GM13976 (cell line): ENCODE measurements at regions of chr15 and their contacts with region 1.

Region 1: GRCh38 chr15:101294731-101295606 is at the start of gene SNRPA1:
- DNase-seq: peak; percentile 98
- CTCF ChIP-seq: no peak

Region 2: GRCh38 chr15:101179341-101180153 is 115.4 kb before region 1 on chr15:
- in situ Hi-C with region 1: no loop called
- DNase-seq: no peak
- CTCF ChIP-seq: no peak

Region 3: DNA sequence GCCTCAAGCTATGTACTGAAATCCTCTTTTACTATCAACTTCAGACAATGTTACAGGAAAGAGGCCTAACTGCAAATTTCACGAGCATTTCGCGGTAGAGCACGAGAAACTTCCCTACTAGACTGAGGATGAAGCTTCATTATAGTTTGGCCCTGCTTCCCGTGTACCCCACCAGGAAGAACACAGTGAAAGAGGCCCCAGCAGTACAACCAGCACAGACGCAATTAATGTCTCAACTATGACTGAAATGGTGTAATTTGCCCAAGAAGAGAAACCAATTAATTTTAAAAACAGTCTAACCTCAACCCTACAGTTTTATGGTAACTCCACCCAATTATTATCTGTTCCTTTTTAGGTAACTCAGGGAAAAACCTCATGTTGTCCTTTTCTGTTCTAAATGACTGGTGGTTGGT is 55.2 kb before region 1 on chr15:
- in situ Hi-C with region 1: no loop called
- DNase-seq: no peak
- CTCF ChIP-seq: no peak

Region 4: DNA sequence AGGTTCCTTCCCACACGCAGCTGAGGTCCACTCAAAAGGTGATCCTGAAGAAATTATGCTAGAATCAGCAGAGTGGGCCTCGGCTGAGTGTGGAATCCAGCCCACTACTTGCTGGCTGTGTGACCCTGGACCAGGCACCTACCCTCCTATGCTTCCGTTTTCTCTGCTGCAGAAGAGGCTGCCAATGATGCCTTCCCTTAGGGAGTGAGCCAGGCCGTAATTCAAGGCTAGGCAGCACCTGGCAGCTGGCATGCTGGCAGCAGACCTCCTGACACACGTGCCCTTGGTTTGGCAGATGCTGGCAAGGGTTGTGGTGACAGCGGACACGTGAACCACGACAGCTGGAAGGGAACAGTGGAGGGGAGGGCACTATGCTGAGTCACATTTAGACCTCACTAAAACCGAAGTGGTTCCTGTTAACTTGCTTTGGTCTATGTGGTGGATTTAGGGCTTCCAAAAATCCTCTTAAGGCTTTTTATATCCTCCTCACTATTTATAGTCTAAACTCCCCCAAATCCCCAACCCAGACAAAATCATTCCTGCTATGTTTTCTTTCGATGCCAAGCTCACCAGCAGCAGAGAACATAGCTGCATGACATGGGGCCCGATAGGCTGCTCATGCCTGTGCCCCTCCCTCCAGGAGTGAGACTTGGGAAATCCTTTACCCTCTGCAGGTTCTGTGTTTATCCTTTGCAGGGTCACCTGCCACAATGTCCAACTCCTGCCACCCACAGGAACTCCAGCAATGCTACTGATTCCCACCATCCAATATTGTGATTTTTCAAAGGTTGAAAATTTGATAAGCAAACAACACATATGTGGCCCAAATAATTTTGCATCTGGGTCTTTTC is 205.1 kb after region 1 on chr15:
- in situ Hi-C with region 1: loop called (anchors 10 kb)
- DNase-seq: peak; percentile 30
- CTCF ChIP-seq: no peak